ENCODE measurements at regions of chr17 and their contacts with region 1.

Region 1: DNA sequence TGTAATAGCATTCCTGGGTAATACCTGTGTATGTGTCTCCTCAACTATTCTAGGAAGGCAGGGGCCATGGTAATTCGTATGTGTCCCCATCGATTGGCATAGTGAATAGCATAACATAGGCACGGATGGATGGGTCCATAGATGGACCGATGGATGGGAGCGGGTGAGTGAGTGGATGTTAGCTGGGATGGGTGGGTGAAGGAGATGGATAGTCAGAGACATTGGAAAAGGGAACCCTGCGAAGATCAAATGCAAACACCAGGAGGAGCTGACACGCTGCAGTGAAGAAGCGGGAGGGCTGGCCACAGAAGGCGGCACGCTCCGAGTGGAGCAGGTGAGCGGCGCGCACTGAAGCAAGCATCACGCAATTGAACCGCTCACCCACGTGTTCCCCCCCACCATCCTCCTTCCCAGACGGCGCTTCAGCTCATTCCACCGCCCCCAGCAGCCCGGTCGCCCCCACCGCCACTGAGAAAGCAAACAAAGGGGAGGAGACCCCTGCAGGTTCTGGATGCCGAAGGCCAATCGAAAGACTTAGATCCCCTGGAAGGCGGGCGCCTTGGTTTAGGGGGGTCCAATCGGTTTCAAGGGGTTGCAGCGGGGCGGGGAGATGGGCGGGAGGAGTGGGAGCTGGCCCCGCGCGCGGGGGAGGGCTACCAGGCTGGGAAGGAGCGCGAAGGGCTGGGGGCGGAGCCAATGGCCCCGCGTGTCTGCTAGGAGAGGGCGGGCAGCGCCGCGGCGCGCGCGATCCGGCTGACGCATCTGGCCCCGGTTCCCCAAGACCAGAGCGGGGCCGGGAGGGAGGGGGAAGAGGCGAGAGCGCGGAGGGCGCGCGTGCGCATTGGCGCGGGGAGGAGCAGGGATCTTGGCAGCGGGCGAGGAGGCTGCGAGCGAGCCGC is at the start of gene ARRB2:
- DNase-seq: peak; percentile 91 to 99
- H3K4me3 ChIP-seq: peak within 1 kb of the TSS; percentile 73
- H3K27ac ChIP-seq: peak within 1 kb of the TSS; percentile 56
- H3K4me1 ChIP-seq: peaks cover 17% of the 10 kb centered on the region
- H3K27me3 ChIP-seq: no peaks in the 10 kb centered on the region
- CTCF ChIP-seq: peak; percentile 71
- total RNA-seq, gene ARRB2: 79.7 and 110 TPM in 2 replicates

Region 2: DNA sequence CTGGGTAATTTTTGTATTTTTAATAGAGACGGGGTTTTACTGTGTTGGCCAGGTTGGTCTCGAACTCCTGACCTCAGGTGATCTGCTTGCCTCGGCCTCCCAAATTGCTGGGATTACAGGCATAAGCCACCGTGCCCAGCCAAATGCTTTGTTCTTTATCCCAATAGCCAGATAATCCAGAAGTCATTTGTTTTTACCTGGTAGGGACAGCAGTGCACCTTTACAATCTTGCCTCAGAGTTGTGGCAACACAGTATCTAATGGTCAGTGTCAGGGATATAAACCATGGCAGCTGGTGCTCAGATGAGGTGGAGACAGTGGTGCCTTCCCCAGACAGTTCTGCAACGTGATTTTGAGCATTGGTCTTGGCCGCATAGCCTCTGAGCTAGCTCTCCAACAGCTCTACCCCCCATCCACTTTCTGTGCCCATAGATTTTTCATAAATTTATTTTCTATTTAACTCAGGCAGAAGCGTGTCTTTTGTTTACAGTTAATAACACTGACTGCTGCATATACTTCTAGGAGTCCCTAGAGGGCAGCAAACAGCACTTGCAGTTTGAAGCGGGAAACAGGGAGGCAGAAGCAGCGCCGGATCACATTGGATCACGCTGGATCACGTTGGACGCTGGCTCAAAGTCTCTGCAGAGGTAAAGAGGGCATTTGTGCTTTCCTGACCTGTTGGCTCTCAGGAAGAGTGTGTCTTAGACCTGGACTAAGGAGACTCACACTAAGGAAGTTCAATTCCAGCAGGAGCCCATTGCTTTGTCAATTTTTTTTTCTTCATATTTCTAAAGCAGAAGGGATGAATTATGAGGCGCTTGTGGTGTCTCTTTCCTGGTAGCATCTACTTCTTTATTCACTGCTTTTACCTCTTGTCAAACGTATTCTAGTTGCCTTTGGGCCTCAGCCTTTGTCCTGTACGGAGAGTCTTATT is 144.6 kb before region 1 on chr17:
- CTCF ChIA-PET with region 1: no interaction called
- POLR2A ChIA-PET with region 1: no interaction called
- intact Hi-C with region 1: loop called (anchors 10 kb)
- DNase-seq: peak; percentile 54 to 70
- H3K4me3 ChIP-seq: no peak overlapping the region
- H3K27ac ChIP-seq: no peak overlapping the region
- H3K4me1 ChIP-seq: peaks cover 4% of the 10 kb centered on the region; the same call in 1 of the 2 replicates
- H3K27me3 ChIP-seq: no peaks in the 10 kb centered on the region
- CTCF ChIP-seq: peak; percentile 94

Region 3: DNA sequence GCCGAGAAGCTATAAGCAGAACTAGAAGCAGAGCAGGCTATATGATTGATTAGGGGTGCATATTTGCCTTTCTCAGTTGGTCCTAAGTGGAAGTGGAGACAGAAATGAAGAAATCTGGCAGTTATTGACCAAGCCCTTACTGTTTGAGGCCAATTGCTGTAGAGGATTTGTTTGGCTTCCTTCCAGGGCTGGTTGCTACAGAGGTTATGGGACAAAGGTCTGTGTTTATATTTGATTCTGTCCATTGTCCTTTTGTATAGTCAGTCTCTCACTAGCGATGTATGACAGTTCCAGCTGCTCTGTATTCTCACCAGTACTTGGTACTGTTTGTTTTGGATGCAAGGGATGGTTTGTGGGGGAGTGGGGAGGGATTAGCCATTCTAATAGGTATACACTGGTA is 61.3 kb before region 1 on chr17:
- CTCF ChIA-PET with region 1: no interaction called
- POLR2A ChIA-PET with region 1: no interaction called
- intact Hi-C with region 1: no loop called
- DNase-seq: no peak
- H3K4me3 ChIP-seq: no peak overlapping the region
- H3K27ac ChIP-seq: no peak overlapping the region
- H3K4me1 ChIP-seq: no peaks in the 10 kb centered on the region
- H3K27me3 ChIP-seq: no peaks in the 10 kb centered on the region
- CTCF ChIP-seq: no peak

Region 4: GRCh38 chr17:4678427-4679026 is 31.5 kb before region 1 on chr17:
- CTCF ChIA-PET with region 1: no interaction called
- POLR2A ChIA-PET with region 1: no interaction called
- intact Hi-C with region 1: no loop called
- DNase-seq: peak; percentile 63 to 92
- H3K4me3 ChIP-seq: no peak overlapping the region
- H3K27ac ChIP-seq: peak overlapping the region; percentile 60
- H3K4me1 ChIP-seq: peaks cover 38% of the 10 kb centered on the region
- H3K27me3 ChIP-seq: no peaks in the 10 kb centered on the region
- CTCF ChIP-seq: no peak

Region 5: GRCh38 chr17:4739122-4740024 is 29.3 kb after region 1 on chr17 and contains the starts of genes CXCL16 and ZMYND15:
- CTCF ChIA-PET with region 1: interaction called, 5 read pairs
- POLR2A ChIA-PET with region 1: no interaction called
- intact Hi-C with region 1: loop called (anchors 2 kb)
- DNase-seq: peak in 1 of 2 experiments; percentile 75
- H3K4me3 ChIP-seq: peak within 1 kb of the TSS; percentile 95
- H3K27ac ChIP-seq: peak within 1 kb of the TSS; percentile 75
- H3K4me1 ChIP-seq: peaks cover 12% of the 10 kb centered on the region; the same call in 1 of the 2 replicates
- H3K27me3 ChIP-seq: 0 out of 2 replicates have a peak, but pooled peaks cover 6% of the 10 kb centered on the region
- CTCF ChIP-seq: 0 out of 2 replicates have a peak, but pooled peaks have one; percentile 3
- total RNA-seq, gene CXCL16: 52.4 and 60.2 TPM in 2 replicates
- total RNA-seq, gene ZMYND15: 2.3 and 5.4 TPM in 2 replicates

Region 6: DNA sequence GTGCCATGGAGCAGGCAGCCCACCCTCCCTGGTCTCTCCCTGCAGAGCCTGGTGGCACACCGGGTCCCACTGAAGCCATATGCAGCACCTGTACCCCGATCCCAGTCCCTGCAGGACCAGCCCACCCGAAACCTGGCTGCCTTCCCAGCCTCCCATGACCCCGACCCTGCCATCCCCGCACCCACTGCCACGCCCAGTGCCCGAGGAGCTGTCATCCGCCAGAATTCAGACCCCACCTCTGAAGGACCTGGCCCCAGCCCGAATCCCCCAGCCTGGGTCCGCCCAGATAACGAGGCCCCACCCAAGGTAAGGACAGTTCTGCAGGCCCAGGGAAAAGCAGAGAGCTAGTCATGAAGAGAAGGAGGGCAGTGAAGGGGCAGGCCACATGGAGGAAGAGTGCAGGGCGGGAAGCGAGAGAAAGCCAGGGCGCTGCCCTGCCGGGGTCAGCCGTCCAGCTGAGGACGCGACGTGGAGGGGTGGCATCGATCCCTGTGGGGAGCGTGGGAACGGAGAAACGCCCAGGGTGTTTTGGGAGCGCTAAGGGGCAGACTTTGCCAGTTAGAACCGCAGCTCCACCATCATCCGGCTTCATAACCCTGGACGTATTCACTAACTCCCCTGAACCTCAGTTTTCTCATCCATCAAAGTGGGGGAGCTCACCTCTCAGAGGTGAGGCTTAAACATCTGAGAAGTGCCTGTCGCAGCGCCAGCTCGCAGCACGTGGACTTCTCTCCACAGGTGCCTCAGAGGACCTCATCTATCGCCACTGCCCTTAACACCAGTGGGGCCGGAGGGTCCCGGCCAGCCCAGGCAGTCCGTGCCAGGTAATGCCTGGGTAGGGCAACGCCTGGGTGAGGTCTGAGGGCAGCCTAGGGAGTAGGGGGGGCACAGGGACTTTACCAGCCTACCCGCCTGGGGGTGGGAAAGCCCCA is 181.6 kb after region 1 on chr17:
- CTCF ChIA-PET with region 1: no interaction called
- POLR2A ChIA-PET with region 1: no interaction called
- intact Hi-C with region 1: loop called (anchors 1 kb)
- DNase-seq: no peak
- H3K4me3 ChIP-seq: no peak overlapping the region
- H3K27ac ChIP-seq: no peak overlapping the region
- H3K4me1 ChIP-seq: no peaks in the 10 kb centered on the region
- H3K27me3 ChIP-seq: no peaks in the 10 kb centered on the region
- CTCF ChIP-seq: no peak

Region 7: GRCh38 chr17:4948931-4949320 is 238.9 kb after region 1 on chr17:
- CTCF ChIA-PET with region 1: no interaction called
- POLR2A ChIA-PET with region 1: no interaction called
- intact Hi-C with region 1: loop called (anchors 1 kb)
- DNase-seq: peak; percentile 71 to 92
- H3K4me3 ChIP-seq: peak overlapping the region; percentile 99
- H3K27ac ChIP-seq: peak overlapping the region; percentile 99
- H3K4me1 ChIP-seq: peaks cover 39% of the 10 kb centered on the region
- H3K27me3 ChIP-seq: no peaks in the 10 kb centered on the region
- CTCF ChIP-seq: no peak

Measured in PC-9 (cell line).